AG04449 (cell line): ENCODE measurements at regions of chr17 and their contacts with region 1.

Region 1: GRCh38 chr17:7515911-7516610 is 31.9 kb downstream of the POLR2A start:
- DNase-seq: no peak
- H3K4me3 ChIP-seq: no peak overlapping the region
- CTCF ChIP-seq: no peak

Region 2: DNA sequence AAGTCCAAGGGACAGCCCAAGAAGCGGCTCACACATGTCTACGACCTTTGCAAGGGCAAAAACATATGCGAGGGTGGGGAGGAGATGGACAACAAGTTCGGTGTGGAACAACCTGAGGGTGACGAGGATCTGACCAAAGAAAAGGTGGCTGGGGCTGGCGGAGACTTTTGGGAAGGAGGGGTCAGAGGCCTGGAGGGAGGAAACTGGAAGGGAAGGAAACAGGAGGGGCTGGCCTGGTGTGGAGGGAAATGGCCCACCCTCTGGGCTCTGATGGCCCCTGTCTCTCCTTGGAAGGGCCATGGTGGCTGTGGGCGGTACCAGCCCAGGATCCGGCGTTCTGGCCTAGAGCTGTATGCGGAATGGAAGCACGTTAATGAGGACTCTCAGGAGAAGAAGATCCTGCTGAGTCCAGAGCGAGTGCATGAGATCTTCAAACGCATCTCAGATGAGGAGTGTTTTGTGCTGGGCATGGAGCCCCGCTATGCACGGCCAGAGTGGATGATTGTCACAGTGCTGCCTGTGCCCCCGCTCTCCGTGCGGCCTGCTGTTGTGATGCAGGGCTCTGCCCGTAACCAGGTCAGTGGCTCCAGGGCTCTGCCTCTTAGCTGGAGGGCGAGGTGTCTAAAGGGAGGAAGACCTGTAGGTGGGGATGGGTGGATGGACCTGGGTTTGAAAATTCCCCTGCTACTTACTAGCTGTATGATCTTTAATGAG is 19.4 kb before region 1 on chr17:
- CTCF ChIA-PET with region 1: interaction called, 63 read pairs
- POLR2A ChIA-PET with region 1: interaction called, 3 read pairs
- DNase-seq: no peak
- H3K4me3 ChIP-seq: no peak overlapping the region
- CTCF ChIP-seq: no peak

Region 3: DNA sequence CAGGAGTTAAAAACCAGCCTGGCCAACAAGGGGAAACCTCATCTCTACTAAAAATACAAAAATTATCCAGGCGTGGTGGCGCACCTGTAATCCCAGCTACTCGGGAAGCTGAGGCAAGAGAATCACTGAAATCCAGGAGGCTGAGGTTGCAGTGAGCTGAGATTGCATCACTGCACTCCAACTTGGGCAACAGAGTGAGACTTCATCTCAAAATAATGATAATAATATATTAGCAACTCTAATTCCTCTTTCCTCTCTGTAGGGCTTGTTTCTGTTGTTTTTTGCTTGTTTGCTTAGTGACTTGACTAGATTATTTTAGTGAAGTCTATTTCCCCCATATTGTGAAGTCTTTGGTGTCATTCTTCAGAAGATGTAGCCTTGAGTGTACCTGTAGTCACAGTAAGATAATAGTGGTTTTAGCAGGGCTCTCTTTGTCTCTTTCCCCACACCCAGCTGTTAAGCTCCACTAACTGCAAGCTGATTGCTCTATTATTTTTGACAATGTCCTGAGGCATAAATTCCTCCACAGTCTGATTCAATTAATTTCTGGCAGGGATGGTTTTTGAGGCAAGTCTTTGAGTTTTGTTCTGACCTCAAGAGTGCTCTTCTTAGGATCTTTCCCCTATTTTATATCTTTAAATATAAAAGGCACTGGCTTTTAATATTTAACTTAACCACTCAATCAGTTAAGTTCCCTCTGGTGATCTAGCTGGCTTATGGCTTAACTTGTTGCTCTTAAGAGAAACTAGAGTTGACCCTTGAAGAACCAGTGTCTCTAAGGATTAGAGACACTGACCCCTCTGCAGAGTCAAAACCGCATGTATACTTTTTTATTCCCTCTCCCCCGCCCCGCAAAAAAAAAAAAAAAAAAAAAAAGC is 14.2 kb after region 1 on chr17:
- CTCF ChIA-PET with region 1: interaction called, 40 read pairs
- POLR2A ChIA-PET with region 1: interaction called, 3 read pairs
- DNase-seq: no peak
- H3K4me3 ChIP-seq: no peak overlapping the region
- CTCF ChIP-seq: no peak

Region 4: GRCh38 chr17:7572588-7573323 is 56.7 kb after region 1 on chr17:
- CTCF ChIA-PET with region 1: interaction called, 12 read pairs
- POLR2A ChIA-PET with region 1: no interaction called
- DNase-seq: no peak
- H3K4me3 ChIP-seq: peak overlapping the region; percentile 100
- CTCF ChIP-seq: no peak

Region 5: DNA sequence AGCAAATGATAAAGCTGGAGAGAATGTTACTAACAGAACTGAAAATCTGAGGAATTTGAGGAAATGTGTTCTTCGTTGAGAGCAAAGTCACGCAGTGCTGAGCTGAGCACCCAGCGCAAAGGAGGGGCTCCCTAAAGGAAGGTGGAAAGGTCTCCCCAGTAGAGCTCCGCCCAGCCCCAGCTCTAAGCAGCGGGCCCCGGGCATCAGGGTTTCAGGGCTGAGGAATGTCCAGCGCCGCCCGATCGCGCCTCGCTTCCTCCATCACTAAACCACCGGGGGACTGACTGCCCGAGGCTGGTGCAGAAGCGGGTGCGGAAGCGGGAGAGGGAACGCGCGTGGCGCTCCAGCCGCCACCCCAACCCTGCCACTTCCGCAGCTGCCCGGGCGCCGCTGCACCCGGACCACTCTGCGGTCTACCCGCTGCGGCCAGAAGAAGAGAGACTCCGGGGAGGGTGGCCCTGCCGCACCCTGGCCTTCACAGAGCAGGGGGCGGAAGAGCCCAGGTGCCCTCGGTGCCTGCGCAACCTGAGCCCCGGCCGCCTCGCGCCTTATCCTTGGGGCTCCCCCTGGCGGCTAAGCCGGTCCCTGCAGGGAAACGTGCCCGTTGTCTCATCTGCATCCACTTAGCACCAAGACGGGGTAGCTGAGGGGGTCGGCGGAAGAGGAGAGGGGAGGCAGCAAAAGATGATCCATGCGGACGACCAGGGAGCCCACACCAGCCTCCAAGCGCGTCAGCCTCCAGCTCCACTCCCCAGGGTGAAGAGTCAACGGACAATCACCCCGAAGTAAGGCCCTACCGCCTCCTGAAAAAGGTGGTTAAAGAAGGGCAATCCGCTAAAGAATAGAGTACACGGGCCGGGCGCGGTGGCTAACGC is 474.0 kb after region 1 on chr17:
- CTCF ChIA-PET with region 1: no interaction called
- POLR2A ChIA-PET with region 1: no interaction called
- DNase-seq: no peak
- H3K4me3 ChIP-seq: peak overlapping the region; percentile 66
- CTCF ChIP-seq: peak; percentile 97